ENCODE measurements at regions of chr4 and their contacts with region 1.

Region 1: GRCh38 chr4:85747882-85748491 is 273.0 kb downstream of the ARHGAP24 start:
- DNase-seq: no peak
- ATAC-seq: peak; percentile 80

Region 2: DNA sequence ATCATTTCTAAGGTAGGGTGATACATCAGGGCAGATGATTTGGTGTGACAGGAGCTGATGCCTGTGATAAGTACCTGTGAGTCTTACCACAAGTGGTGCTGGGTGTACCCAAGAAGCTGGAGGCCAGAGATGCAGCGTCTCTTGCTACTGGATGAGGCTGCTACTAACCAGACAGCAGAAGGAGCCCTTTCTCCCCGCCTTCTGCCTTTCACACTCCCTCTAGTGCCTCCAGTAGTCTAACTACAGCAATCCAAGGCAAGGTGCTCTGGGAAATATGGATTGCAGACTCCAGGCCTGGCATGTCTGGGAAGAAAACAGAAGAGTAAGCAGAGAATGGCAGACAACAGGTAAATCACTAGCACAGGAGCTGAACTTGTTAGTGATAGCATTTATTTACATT is 1719.6 kb before region 1 on chr4:
- intact Hi-C with region 1: no loop called
- DNase-seq: no peak
- ATAC-seq: no peak

Region 3: DNA sequence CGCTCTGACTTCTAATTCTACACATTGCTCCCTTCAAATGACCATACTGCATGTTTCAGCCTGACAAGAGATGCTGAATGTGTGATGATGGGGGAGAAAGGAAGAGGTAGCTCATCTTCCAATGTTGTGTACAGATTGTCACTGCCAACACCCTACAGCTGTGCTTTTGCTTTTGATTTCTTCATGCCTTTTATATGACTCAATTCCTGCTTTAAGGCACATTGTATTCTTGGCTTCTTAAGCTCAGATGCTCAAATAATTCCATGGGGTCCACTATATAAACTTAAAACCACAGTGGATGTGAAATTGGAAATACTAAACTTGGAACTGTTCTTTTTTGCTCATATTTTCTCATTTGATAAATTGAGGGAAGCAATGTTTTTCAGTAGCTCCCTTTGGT is 598.3 kb before region 1 on chr4:
- intact Hi-C with region 1: loop called (anchors 10 kb)
- DNase-seq: no peak
- ATAC-seq: peak; percentile 51